Dendritic cell treated with granulocyte-macrophage colony-stimulating factor and Interleukin-4, amounts not matched to agents 40 ng/mL and 50 ng/mL, for 4 days (primary cell): ENCODE measurements at regions of chr5 and their contacts with region 1.

Region 1: DNA sequence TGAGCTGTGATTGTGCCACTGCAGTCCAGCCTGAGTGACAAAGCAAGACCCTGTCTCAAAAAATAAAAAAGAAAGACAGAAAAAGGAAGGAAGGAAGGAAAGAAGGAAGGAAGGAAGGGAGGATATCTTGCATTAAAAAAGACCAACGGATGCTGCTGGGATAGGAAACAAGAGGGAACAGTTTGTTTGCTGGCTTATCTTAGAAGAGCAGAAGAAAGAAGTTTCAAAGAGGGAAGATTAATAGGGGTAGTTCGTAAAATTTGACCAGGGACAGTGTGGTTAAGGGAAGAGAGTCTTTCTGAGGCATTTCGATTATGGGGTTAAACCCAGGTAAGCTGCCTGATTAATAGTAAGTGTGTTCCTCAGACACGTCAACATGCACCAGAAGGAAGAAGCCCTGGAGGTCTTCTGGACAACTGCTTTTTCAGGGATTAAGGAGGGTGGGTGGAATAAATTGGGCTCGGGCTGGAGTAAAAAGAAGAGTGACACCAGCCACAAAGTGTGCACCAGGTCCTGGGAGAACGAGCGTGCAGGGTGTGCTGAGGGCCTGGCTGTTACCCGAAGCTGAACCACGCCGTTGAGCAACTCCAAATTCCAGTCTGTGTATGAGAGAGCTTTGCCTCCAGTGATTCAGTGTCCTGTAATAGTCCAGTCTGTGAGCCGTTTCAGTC is 24.8 kb downstream of the FYB1 start:
- H3K4me3 Mint-ChIP-seq: no peak overlapping the region
- H3K27ac Mint-ChIP-seq: peak overlapping the region; percentile 67
- H3K4me1 Mint-ChIP-seq: peaks cover 70% of the 10 kb centered on the region
- H3K27me3 Mint-ChIP-seq: no peaks in the 10 kb centered on the region

Region 2: DNA sequence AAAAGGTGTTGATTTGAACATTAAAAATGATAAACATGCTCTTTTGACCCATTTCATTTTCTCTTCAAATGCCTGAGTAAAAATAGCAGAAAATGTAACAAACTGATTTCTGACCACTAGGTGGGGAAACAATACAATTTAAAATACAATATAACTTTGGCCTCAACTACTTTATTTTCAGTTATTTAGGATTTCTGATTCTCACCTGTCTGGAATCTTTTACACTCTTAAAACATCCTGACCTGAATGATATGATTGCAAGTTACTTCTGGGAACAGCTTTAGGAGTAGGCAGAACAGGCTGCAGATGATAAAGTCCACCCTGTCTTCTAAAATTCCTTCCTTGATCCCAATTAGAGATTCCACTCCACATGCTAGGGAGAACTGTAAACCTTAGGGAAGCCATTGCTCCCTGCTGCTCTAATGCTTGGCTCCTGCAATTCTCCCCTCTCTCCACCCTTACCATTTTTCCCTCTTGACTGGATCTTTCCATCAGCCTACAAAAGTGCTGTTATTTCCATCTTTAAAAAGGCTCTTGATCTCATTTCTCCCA is 45.5 kb before region 1 on chr5:
- intact Hi-C with region 1: loop called (anchors 5 kb)
- H3K4me3 Mint-ChIP-seq: no peak overlapping the region
- H3K27ac Mint-ChIP-seq: peak overlapping the region; percentile 7
- H3K4me1 Mint-ChIP-seq: peaks cover 60% of the 10 kb centered on the region
- H3K27me3 Mint-ChIP-seq: no peaks in the 10 kb centered on the region

Region 3: GRCh38 chr5:39158127-39158593 is 36.4 kb before region 1 on chr5:
- intact Hi-C with region 1: loop called (anchors 5 kb)
- H3K4me3 Mint-ChIP-seq: peak overlapping the region; percentile 9
- H3K27ac Mint-ChIP-seq: peak overlapping the region; percentile 87
- H3K4me1 Mint-ChIP-seq: peaks cover 54% of the 10 kb centered on the region
- H3K27me3 Mint-ChIP-seq: no peaks in the 10 kb centered on the region

Region 4: DNA sequence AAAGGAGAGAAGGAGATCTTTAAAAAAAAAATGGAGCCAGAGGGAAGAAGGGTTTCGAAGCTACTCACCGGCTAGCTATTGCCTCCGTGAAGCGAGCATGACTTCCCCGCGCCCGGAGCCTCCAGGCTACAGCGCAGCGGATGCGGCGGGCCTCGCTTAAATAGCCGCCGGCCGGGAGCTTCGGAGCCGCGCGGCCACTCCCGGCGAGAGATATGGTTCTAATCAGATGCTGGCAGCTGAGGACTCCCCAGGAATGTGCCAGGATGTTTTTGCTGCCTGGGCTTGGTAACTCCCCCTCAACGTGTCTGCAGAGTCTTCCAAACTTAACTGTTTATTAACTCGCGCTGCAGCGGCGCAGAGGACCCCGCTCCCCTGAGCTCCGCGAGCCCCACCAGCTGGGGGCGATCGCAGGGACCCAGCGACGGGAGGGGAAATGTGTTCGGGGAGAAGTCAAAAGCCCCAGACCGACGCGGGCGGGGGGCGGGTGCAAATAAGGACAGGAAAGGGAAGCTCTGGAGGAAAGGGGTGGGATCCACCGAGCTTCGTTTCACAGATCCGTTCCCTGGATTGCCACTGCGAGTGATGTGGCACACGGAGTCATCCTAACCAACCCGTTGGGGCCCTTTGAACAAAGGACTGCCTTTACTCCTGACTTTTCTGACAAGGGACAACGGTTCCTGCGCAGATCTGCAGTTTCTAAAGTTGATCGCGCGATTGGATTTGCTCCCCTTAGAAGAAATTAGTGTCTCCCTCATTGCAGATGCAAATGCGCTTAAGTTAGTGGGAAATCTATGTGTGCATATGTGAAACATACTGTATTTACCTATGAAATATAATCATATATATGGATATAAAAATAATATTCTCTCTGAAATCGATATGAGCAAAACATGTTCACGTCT is 230.4 kb after region 1 on chr5 and contains the start of gene DAB2:
- intact Hi-C with region 1: no loop called
- H3K4me3 Mint-ChIP-seq: peak within 1 kb of the TSS; percentile 96
- H3K27ac Mint-ChIP-seq: peak within 1 kb of the TSS; percentile 96
- H3K4me1 Mint-ChIP-seq: peaks cover 36% of the 10 kb centered on the region
- H3K27me3 Mint-ChIP-seq: no peaks in the 10 kb centered on the region